AG04450 (cell line): ENCODE measurements at regions of chr9 and their contacts with region 1.

Region 1: DNA sequence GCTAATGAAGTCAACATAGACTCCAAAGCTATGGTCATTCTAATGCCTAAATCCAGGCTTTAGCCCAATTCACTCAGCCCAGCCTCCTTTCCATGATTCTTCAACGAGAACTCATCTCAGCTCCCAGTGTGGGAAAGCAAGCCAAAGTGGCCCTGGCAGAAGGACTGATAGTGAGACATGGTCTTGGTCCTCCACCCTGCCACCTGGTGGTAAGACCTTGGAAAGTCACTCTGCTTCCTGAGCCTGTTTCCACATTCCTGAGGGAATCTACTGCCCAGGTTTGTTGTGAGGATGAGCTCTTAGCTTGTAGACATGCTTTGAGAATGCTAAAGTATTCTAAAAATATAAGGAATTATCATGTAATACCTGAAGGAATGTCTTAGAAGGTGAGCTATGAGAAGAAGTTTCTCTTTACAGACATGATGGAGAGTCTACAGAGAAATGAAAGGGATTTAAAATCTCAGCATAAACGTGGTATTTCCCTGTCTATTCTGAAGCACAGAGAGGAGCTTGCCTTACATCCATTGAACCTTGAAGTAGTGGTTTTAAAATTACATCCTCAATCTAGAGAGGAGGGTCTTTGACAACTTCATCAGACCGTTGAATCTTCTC is 173.5 kb downstream of the TRIM32 start:
- DNase-seq: peak; percentile 29
- H3K4me3 ChIP-seq: no peak overlapping the region
- H3K27ac ChIP-seq: no peak overlapping the region
- H3K27me3 ChIP-seq: peaks cover 5% of the 10 kb centered on the region
- CTCF ChIP-seq: peak; percentile 80

Region 2: GRCh38 chr9:116671605-116672004 is 189.0 kb before region 1 on chr9:
- CTCF ChIA-PET with region 1: no interaction called
- POLR2A ChIA-PET with region 1: no interaction called
- DNase-seq: no peak
- H3K4me3 ChIP-seq: no peak overlapping the region
- H3K27ac ChIP-seq: no peak overlapping the region
- H3K27me3 ChIP-seq: no peaks in the 10 kb centered on the region
- CTCF ChIP-seq: no peak

Region 3: DNA sequence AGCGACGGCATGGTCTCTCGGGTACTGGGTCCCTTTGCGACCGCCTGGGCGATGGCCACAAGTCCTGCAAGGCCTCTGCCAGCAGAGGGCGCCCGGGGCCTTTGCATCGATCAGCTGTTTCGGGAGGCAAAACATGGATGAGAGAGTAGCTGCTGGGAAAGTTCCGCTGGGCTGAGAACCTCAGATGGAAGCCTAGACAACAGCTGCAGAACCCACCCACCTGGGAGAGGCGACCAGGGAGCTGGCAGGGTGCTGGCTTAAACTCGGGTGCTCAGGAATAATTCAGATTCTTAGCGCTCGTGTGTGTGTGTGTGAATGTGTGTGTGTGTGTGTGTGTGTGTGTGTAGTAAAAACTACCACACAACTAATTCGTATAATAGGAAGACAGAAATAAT is 123.5 kb before region 1 on chr9:
- CTCF ChIA-PET with region 1: interaction called, 558 read pairs
- POLR2A ChIA-PET with region 1: no interaction called
- DNase-seq: peak; percentile 47
- H3K4me3 ChIP-seq: no peak overlapping the region
- H3K27ac ChIP-seq: no peak overlapping the region
- H3K27me3 ChIP-seq: peaks cover 2% of the 10 kb centered on the region
- CTCF ChIP-seq: peak; percentile 98

Region 4: GRCh38 chr9:116791326-116791725 is 69.3 kb before region 1 on chr9:
- CTCF ChIA-PET with region 1: interaction called, 10 read pairs
- POLR2A ChIA-PET with region 1: no interaction called
- DNase-seq: peak; percentile 11
- H3K4me3 ChIP-seq: no peak overlapping the region
- H3K27ac ChIP-seq: no peak overlapping the region
- H3K27me3 ChIP-seq: peaks cover 8% of the 10 kb centered on the region
- CTCF ChIP-seq: no peak

Region 5: DNA sequence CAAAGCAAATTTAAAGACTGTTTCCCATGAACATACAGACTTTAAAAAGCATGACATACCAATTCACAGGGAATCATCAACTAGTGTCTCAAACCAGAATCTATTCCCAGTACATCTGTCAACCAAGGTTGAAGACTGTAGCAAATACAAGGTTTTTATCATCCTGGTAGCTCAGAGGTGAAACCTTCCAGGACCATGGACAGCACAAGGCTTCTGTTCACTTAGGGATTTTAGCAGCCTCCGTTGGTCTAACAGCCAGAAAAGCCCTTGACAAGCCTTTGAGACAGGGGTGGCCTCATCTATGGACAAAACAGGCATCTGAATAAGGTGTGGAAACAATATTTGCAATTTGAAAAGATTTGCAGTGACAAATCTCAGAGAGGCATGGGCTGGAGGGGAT is 54.5 kb before region 1 on chr9:
- CTCF ChIA-PET with region 1: interaction called, 12 read pairs
- POLR2A ChIA-PET with region 1: no interaction called
- DNase-seq: no peak
- H3K4me3 ChIP-seq: no peak overlapping the region
- H3K27ac ChIP-seq: no peak overlapping the region
- H3K27me3 ChIP-seq: peaks cover 3% of the 10 kb centered on the region
- CTCF ChIP-seq: no peak

Region 6: DNA sequence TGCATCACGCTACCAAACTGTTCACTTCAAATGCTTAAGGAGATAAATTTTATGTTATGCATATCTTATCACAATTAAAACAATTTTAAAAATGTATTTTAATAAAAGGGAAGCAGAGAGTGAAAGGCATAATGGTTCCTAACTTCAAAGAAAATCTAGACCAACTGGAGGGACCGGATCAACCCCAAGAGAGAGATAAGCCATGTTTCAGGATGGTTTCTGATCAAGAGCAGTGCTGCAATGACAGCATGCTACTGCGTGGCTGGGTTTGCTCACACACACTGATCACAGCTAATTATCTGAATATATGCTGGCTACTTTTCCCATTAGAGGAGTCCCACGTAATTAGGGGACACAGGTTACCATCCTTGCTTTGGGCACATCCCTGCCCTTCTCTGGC is 14.3 kb before region 1 on chr9:
- CTCF ChIA-PET with region 1: interaction called, 18 read pairs
- POLR2A ChIA-PET with region 1: no interaction called
- DNase-seq: no peak
- H3K4me3 ChIP-seq: no peak overlapping the region
- H3K27ac ChIP-seq: no peak overlapping the region
- H3K27me3 ChIP-seq: peaks cover 7% of the 10 kb centered on the region
- CTCF ChIP-seq: no peak

Region 7: DNA sequence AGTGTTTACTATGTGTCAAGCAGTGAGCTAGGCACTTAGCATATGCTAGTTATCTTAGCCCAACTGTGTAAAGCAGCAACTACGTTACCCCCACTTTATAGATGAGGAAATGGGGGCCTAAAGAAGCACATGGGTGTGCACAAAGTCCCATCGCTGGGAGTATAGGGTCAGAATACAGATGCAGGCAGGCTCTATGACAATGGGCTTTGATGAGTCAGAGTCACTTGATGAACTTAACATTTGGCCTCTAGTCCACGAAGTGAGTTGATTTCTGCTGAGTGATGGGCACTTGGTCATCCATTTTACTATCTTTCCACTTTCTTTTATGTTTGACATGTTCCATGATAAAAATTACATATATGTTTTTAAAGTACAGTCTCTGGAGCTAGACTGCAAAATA is 30.8 kb after region 1 on chr9:
- CTCF ChIA-PET with region 1: interaction called, 11 read pairs
- POLR2A ChIA-PET with region 1: no interaction called
- DNase-seq: no peak
- H3K4me3 ChIP-seq: no peak overlapping the region
- H3K27ac ChIP-seq: no peak overlapping the region
- H3K27me3 ChIP-seq: no peaks in the 10 kb centered on the region
- CTCF ChIP-seq: no peak

Region 8: DNA sequence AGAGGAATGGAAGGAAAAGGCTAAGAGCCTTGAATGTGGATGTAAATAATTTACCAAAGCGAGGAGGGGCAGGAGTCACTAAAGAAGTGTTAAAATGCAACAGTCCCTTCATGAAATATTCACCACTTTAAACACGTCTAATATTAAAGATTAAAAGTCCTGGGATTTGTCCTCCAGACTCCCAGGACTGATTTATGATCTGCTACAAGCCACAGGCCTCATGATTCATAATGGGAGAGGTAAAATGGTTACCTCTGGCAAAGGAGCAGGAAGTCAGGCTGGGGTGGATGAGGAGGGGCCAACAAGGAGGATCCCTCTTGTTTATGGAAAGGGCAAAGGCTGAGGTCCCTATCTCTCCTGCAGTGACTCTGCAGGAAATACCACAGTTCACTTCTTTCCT is 118.8 kb after region 1 on chr9:
- CTCF ChIA-PET with region 1: no interaction called
- POLR2A ChIA-PET with region 1: no interaction called
- DNase-seq: no peak
- H3K4me3 ChIP-seq: no peak overlapping the region
- H3K27ac ChIP-seq: no peak overlapping the region
- H3K27me3 ChIP-seq: peaks cover 2% of the 10 kb centered on the region
- CTCF ChIP-seq: no peak

Region 9: GRCh38 chr9:117098331-117098730 is 237.7 kb after region 1 on chr9:
- CTCF ChIA-PET with region 1: no interaction called
- POLR2A ChIA-PET with region 1: no interaction called
- DNase-seq: no peak
- H3K4me3 ChIP-seq: no peak overlapping the region
- H3K27ac ChIP-seq: no peak overlapping the region
- H3K27me3 ChIP-seq: no peaks in the 10 kb centered on the region
- CTCF ChIP-seq: no peak

Region 10: GRCh38 chr9:117138231-117138630 is 277.6 kb after region 1 on chr9:
- CTCF ChIA-PET with region 1: no interaction called
- POLR2A ChIA-PET with region 1: no interaction called
- DNase-seq: no peak
- H3K4me3 ChIP-seq: no peak overlapping the region
- H3K27ac ChIP-seq: no peak overlapping the region
- H3K27me3 ChIP-seq: no peaks in the 10 kb centered on the region
- CTCF ChIP-seq: no peak